Left ventricle myocardium inferior (tissue), 1 donor: ENCODE measurements at regions of chr5 and their contacts with region 1.

Region 1: GRCh38 chr5:172697123-172698121 is 56.4 kb downstream of the NEURL1B start:
- DNase-seq: peak; percentile 85
- H3K4me3 ChIP-seq: peak overlapping the region; percentile 69
- H3K27ac ChIP-seq: peak overlapping the region; percentile 92
- H3K4me1 ChIP-seq: peaks cover 76% of the 10 kb centered on the region
- H3K27me3 ChIP-seq: no peaks in the 10 kb centered on the region
- CTCF ChIP-seq: peak; percentile 95

Region 2: DNA sequence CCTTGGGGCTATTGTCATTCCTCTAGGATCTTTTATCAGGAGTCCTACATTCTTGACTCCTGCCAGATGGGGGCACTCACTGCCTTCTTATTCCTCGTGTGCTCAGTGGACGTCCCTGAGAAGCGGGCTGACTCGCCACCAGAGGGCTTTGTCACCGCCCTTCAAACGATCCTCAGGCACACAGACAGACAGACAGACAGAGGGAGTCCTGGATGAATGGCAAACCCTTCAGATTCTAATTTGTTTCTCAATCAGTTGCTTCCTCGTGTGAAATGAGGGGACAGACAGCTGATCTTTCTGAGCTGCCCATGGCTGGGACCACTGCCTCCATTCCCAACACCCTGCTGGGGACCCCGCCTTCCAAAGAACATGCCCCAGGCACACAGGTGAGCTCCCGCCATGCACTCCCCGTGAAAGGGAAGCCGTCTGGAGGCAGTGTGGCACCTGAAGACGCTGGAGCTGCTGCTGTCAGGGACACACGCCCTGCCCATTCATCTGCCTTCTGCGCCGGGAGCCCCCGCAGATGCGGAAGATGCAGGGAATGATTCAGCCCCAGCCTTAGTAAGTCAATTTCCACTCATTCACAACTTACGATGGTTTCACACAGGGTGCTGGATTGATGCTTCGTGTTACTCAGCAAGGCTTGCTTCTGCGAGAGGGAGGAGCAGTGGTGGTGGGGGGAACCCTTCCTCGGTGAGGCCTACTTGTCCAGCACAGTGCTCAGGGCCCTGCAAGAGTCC is 218.2 kb before region 1 on chr5:
- intact Hi-C with region 1: loop called (anchors 5 kb)
- DNase-seq: peak; percentile 84
- H3K4me3 ChIP-seq: peak overlapping the region; percentile 47
- H3K27ac ChIP-seq: peak overlapping the region; percentile 88
- H3K4me1 ChIP-seq: peaks cover 22% of the 10 kb centered on the region
- H3K27me3 ChIP-seq: no peaks in the 10 kb centered on the region
- CTCF ChIP-seq: peak; percentile 87

Region 3: GRCh38 chr5:172640822-172641358 is 56.5 kb before region 1 on chr5 and contains the start of gene NEURL1B:
- intact Hi-C with region 1: loop called (anchors 10 kb)
- DNase-seq: peak; percentile 84
- H3K4me3 ChIP-seq: peak within 1 kb of the TSS; percentile 85
- H3K27ac ChIP-seq: peak within 1 kb of the TSS; percentile 97
- H3K4me1 ChIP-seq: peaks cover 57% of the 10 kb centered on the region
- H3K27me3 ChIP-seq: no peaks in the 10 kb centered on the region
- CTCF ChIP-seq: peak; percentile 40
- total RNA-seq, gene NEURL1B: 24.0 TPM

Region 4: DNA sequence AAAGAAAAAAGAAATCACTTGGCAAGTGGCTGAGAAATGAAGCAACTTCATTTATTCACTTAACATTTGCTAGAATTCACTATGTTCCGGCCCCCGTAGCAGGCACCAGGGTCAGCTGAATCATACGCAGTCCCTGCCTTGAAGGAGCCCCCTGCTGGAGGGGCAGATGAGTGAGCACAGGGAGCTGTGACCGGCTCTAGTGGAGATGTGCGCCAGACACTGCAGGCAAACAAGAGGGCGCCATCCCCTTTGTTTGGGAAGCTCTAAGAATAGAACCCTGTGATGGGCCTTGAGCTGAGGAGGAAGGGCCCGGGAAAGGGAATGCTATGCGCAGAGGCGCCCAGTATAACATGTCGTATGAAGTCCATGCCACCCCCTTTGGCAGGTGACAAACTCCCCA is 241.6 kb after region 1 on chr5:
- intact Hi-C with region 1: no loop called
- DNase-seq: no peak
- H3K4me3 ChIP-seq: no peak overlapping the region
- H3K27ac ChIP-seq: no peak overlapping the region
- H3K4me1 ChIP-seq: peaks cover 35% of the 10 kb centered on the region
- H3K27me3 ChIP-seq: no peaks in the 10 kb centered on the region
- CTCF ChIP-seq: peak; percentile 35